CD4-positive, alpha-beta memory T cell (primary cell): ENCODE measurements at regions of chr16 and their contacts with region 1.

Region 1: GRCh38 chr16:30183233-30184095 is at the start of gene CORO1A:
- DNase-seq: peak; percentile 80 to 87 (median 84)
- H3K4me3 ChIP-seq: peak within 1 kb of the TSS; percentile 91 to 93
- H3K4me3 Mint-ChIP-seq: peak within 1 kb of the TSS; percentile 94 to 99 (median 98)
- H3K27ac ChIP-seq: peak within 1 kb of the TSS; percentile 77
- H3K27ac Mint-ChIP-seq: peak within 1 kb of the TSS; percentile 96 to 99 (median 97)
- H3K4me1 ChIP-seq: peaks cover 40% of the 10 kb centered on the region
- H3K4me1 Mint-ChIP-seq: peaks cover 15 to 59% (median 29%) of the 10 kb centered on the region in 4 donors
- H3K27me3 ChIP-seq: no peaks in the 10 kb centered on the region
- H3K27me3 Mint-ChIP-seq: no peaks in the 10 kb centered on the region
- total RNA-seq, gene CORO1A: 745 to 769 TPM

Region 2: GRCh38 chr16:30075507-30076275 is 107.8 kb before region 1 on chr16 and contains the start of gene PPP4C:
- CTCF ChIA-PET with region 1: interaction called, 5 read pairs
- POLR2A ChIA-PET with region 1: interaction called, 46 read pairs
- intact Hi-C with region 1: no loop called
- DNase-seq: peak; percentile 89 to 90 (median 90)
- H3K4me3 ChIP-seq: peak within 1 kb of the TSS; percentile 80 to 93
- H3K4me3 Mint-ChIP-seq: peak within 1 kb of the TSS; percentile 92 to 99 (median 94)
- H3K27ac ChIP-seq: peak within 1 kb of the TSS; percentile 89
- H3K27ac Mint-ChIP-seq: peak within 1 kb of the TSS; percentile 96 to 99 (median 98)
- H3K4me1 ChIP-seq: peaks cover 33% of the 10 kb centered on the region
- H3K4me1 Mint-ChIP-seq: peaks cover 20 to 53% (median 34%) of the 10 kb centered on the region in 4 donors
- H3K27me3 ChIP-seq: no peaks in the 10 kb centered on the region
- H3K27me3 Mint-ChIP-seq: no peaks in the 10 kb centered on the region
- total RNA-seq, gene PPP4C: 75.8 to 86.3 TPM

Region 3: GRCh38 chr16:30122604-30123160 is 60.8 kb before region 1 on chr16:
- CTCF ChIA-PET with region 1: interaction called, 3 read pairs
- POLR2A ChIA-PET with region 1: interaction called, 120 read pairs
- intact Hi-C with region 1: no loop called
- DNase-seq: peak in 1 of 5 donors; percentile 54
- H3K4me3 ChIP-seq: peak overlapping the region; percentile 52 to 82
- H3K4me3 Mint-ChIP-seq: peak overlapping the region; percentile 86 to 92 (median 90)
- H3K27ac ChIP-seq: peak overlapping the region; percentile 70
- H3K27ac Mint-ChIP-seq: peak overlapping the region; percentile 81 to 93 (median 88)
- H3K4me1 ChIP-seq: peaks cover 25% of the 10 kb centered on the region
- H3K4me1 Mint-ChIP-seq: peaks cover 8 to 38% (median 20%) of the 10 kb centered on the region in 4 donors
- H3K27me3 ChIP-seq: no peaks in the 10 kb centered on the region
- H3K27me3 Mint-ChIP-seq: no peaks in the 10 kb centered on the region

Region 4: DNA sequence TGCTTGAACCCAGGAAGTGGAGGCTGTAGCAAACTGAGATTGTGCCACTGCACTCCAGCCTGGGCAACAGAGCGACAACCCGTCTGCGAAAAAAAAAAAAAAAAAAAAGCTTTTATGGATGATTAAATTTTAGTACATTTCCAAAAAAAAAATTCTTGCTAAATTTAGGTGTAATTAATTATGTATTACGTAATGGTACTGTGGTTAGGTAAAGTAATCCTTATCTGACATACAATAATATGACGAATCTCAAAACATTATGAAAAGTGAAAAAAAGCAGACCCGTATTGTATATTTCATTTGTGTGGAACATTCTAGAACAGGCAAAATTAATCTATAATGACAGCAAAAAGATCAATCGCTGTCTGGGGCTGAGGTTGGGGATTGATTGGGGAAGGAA is 10.4 kb before region 1 on chr16:
- CTCF ChIA-PET with region 1: no interaction called
- POLR2A ChIA-PET with region 1: interaction called, 11 read pairs
- intact Hi-C with region 1: no loop called
- DNase-seq: no peak
- H3K4me3 ChIP-seq: no peak overlapping the region
- H3K4me3 Mint-ChIP-seq: no peak overlapping the region
- H3K27ac ChIP-seq: no peak overlapping the region
- H3K27ac Mint-ChIP-seq: no peak overlapping the region
- H3K4me1 ChIP-seq: no peaks in the 10 kb centered on the region
- H3K4me1 Mint-ChIP-seq: peaks cover 0 to 2% (median under 1%) of the 10 kb centered on the region in 4 donors
- H3K27me3 ChIP-seq: no peaks in the 10 kb centered on the region
- H3K27me3 Mint-ChIP-seq: no peaks in the 10 kb centered on the region

Region 5: GRCh38 chr16:30378236-30379204 is 195.1 kb after region 1 on chr16:
- CTCF ChIA-PET with region 1: no interaction called
- POLR2A ChIA-PET with region 1: interaction called, 19 read pairs
- intact Hi-C with region 1: no loop called
- DNase-seq: peak; percentile 98 to 99 (median 99)
- H3K4me3 ChIP-seq: peak overlapping the region; percentile 84 to 91
- H3K4me3 Mint-ChIP-seq: peak overlapping the region; percentile 91 to 100 (median 96)
- H3K27ac ChIP-seq: peak overlapping the region; percentile 96
- H3K27ac Mint-ChIP-seq: peak overlapping the region; percentile 97 to 100 (median 100)
- H3K4me1 ChIP-seq: peaks cover 69% of the 10 kb centered on the region
- H3K4me1 Mint-ChIP-seq: peaks cover 32 to 71% (median 48%) of the 10 kb centered on the region in 4 donors
- H3K27me3 ChIP-seq: no peaks in the 10 kb centered on the region
- H3K27me3 Mint-ChIP-seq: no peaks in the 10 kb centered on the region

Region 6: GRCh38 chr16:30600215-30600614 is 416.8 kb after region 1 on chr16:
- CTCF ChIA-PET with region 1: no interaction called
- POLR2A ChIA-PET with region 1: no interaction called
- intact Hi-C with region 1: no loop called
- DNase-seq: no peak
- H3K4me3 ChIP-seq: no peak overlapping the region
- H3K4me3 Mint-ChIP-seq: no peak overlapping the region
- H3K27ac ChIP-seq: no peak overlapping the region
- H3K27ac Mint-ChIP-seq: no peak overlapping the region
- H3K4me1 ChIP-seq: no peaks in the 10 kb centered on the region
- H3K4me1 Mint-ChIP-seq: peaks cover 0 to 5% (median 3%) of the 10 kb centered on the region in 4 donors
- H3K27me3 ChIP-seq: no peaks in the 10 kb centered on the region
- H3K27me3 Mint-ChIP-seq: no peaks in the 10 kb centered on the region

Region 7: DNA sequence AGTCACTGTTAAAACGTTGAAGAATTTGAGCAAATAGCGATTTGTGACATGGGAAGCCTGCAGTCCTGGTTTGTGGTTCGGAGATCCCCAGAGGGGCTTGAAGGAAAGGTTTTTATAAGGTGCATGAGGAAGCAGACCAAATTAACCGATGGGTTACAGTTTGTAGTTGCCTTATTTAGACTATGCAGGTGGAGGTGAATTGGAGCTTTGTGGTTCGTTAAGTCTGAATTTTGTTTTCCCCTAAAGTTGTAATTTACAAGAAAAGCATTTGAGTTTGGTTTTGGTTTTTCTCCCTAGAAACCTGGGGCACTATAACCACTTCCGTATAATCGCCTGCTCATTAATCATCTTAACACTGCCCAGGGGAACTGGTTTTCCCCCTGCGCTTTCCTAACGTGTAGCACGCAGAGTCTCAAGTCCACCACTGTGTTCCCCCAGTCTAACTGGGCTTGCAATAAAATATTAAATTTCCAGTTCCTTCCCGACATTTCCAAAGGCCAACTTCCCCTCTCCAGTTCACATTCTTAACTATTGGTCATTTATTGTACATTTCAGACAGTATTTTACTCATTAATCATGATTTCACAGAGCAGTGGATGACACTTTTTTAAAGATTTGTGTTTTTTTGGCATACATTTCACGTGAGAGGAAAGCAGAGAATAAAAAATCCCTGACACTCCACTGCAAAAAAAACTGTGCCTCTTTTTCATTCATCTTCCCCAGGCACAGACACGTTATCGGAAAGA is 1691.1 kb after region 1 on chr16:
- CTCF ChIA-PET with region 1: no interaction called
- POLR2A ChIA-PET with region 1: no interaction called
- intact Hi-C with region 1: no loop called
- DNase-seq: peak in 4 of 5 donors; percentile 19 to 72 (median 26)
- H3K4me3 ChIP-seq: peak overlapping the region; percentile 79 to 82
- H3K4me3 Mint-ChIP-seq: peak overlapping the region; percentile 91 to 98 (median 95)
- H3K27ac ChIP-seq: peak overlapping the region; percentile 97
- H3K27ac Mint-ChIP-seq: peak overlapping the region; percentile 87 to 98 (median 95)
- H3K4me1 ChIP-seq: peaks cover 85% of the 10 kb centered on the region
- H3K4me1 Mint-ChIP-seq: peaks cover 60 to 89% (median 71%) of the 10 kb centered on the region in 4 donors
- H3K27me3 ChIP-seq: no peaks in the 10 kb centered on the region
- H3K27me3 Mint-ChIP-seq: no peaks in the 10 kb centered on the region